Activated CD4-positive, alpha-beta memory T cell treated with anti-CD3 and anti-CD28 coated beads, Interleukin-2, amount 10 ng/mL, durations not matched to agents 7 days and 5 days (primary cell): ENCODE measurements at regions of chr17 and their contacts with region 1.

Region 1: GRCh38 chr17:64020056-64020766 is at the start of gene ICAM2:
- DNase-seq: peak; percentile 95
- H3K4me3 Mint-ChIP-seq: peak within 1 kb of the TSS; percentile 99
- H3K27ac Mint-ChIP-seq: peak within 1 kb of the TSS; percentile 100
- H3K4me1 Mint-ChIP-seq: peaks cover 66% of the 10 kb centered on the region
- H3K27me3 Mint-ChIP-seq: no peaks in the 10 kb centered on the region
- total RNA-seq, gene ICAM2: 118 to 122 TPM

Region 2: DNA sequence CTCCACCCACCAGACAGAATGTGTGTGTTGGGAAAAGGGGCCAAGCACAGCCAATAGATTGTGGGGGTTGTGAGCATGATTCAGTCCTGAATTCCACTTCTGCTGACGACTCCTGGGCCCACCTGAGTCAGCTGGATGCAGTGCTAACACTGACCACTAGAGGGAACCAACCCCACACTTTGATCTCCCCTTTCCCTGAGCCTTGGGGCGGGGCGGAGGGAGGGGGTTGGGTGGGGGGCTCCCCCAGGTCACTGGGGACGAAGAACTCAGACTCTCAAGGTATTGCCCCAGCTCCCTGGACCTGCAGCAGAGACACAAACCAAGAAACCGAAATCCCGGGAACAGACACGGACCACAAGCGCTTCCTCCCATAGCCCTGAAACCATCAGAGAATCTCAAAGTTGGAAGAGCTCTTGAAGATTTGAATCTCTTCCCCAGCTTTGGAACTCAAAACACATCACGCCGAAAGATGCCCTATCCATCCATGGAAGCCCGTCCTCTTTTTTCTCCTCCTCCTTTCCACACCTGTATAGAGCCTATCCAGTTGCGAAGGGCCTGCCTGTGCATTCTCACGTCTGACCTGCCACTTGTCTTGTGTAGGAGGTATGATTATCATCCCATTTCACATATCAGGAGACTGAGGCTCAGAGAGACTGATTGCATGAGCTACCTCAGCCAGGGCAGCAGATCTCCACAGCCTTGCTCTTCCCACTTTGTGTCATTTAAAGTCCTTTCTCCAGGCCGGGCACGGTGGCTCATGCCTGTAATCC is 108.4 kb before region 1 on chr17:
- CTCF ChIA-PET with region 1: interaction called, 51 read pairs
- POLR2A ChIA-PET with region 1: interaction called, 4 read pairs
- DNase-seq: peak; percentile 69
- H3K4me3 Mint-ChIP-seq: no peak overlapping the region
- H3K27ac Mint-ChIP-seq: no peak overlapping the region
- H3K4me1 Mint-ChIP-seq: no peaks in the 10 kb centered on the region
- H3K27me3 Mint-ChIP-seq: peaks cover 26% of the 10 kb centered on the region

Region 3: GRCh38 chr17:63931099-63931561 is 89.1 kb before region 1 on chr17:
- CTCF ChIA-PET with region 1: interaction called, 7 read pairs
- POLR2A ChIA-PET with region 1: interaction called, 18 read pairs
- DNase-seq: peak; percentile 79
- H3K4me3 Mint-ChIP-seq: peak overlapping the region; percentile 96
- H3K27ac Mint-ChIP-seq: peak overlapping the region; percentile 90
- H3K4me1 Mint-ChIP-seq: peaks cover 31% of the 10 kb centered on the region
- H3K27me3 Mint-ChIP-seq: peaks cover 4% of the 10 kb centered on the region

Region 4: GRCh38 chr17:63984651-63985386 is 35.4 kb before region 1 on chr17:
- CTCF ChIA-PET with region 1: interaction called, 24 read pairs
- POLR2A ChIA-PET with region 1: interaction called, 22 read pairs
- DNase-seq: peak; percentile 79
- H3K4me3 Mint-ChIP-seq: no peak overlapping the region
- H3K27ac Mint-ChIP-seq: peak overlapping the region; percentile 85
- H3K4me1 Mint-ChIP-seq: peaks cover 35% of the 10 kb centered on the region
- H3K27me3 Mint-ChIP-seq: no peaks in the 10 kb centered on the region

Region 5: DNA sequence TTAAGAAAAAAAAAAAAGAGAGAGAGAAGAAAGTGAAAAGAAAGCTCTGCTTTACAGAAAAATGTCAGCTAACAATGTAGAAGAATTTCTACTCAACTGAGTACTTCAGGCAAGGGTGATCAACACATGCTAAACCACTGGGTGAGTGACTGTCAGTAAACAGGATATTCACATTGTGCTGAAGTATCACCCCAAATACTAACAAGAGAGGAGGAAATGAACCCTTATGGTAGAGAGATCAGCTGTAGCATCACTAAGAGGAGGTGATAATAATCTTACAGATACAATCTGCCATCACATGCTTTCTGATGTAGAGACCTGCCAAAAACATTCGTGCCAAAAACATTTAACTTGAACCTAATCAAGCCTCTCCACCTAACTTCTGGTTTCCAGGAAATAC is 30.9 kb after region 1 on chr17:
- CTCF ChIA-PET with region 1: interaction called, 16 read pairs
- POLR2A ChIA-PET with region 1: interaction called, 23 read pairs
- DNase-seq: peak; percentile 34
- H3K4me3 Mint-ChIP-seq: peak overlapping the region; percentile 18
- H3K27ac Mint-ChIP-seq: peak overlapping the region; percentile 90
- H3K4me1 Mint-ChIP-seq: peaks cover 57% of the 10 kb centered on the region
- H3K27me3 Mint-ChIP-seq: no peaks in the 10 kb centered on the region